Breast epithelium (tissue), 4 donors: ENCODE measurements at regions of chr13 and their contacts with region 1.

Region 1: GRCh38 chr13:109945206-109945960 is 159.0 kb upstream of the IRS2 start:
- DNase-seq: no peak
- H3K4me3 ChIP-seq: no peak overlapping the region
- H3K27ac ChIP-seq: no peak overlapping the region
- H3K4me1 ChIP-seq: no peaks in the 10 kb centered on the region
- H3K27me3 ChIP-seq: no peaks in the 10 kb centered on the region
- CTCF ChIP-seq: no peak
- POLR2A ChIP-seq: no peak

Region 2: DNA sequence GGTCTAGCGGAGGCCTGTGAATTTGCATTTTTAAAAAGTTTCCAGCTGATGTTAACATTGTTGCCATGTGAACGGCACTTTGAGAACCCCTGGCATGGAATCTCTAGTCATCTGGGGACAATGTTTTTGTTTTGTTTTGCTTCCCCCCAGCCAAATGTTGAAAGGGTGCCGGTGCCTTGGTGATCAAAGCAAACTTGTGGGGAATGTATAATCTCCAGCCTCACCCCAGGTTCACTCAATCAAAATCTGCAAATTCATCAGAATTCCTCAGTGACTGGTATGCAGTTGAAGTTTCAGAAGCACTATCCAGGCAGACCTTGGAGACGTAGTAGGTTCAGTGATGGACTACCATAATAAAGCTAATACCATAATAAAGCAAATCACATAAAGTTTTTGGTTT is 887.3 kb before region 1 on chr13:
- intact Hi-C with region 1: no loop called
- DNase-seq: no peak
- H3K4me3 ChIP-seq: no peak overlapping the region
- H3K27ac ChIP-seq: no peak overlapping the region
- H3K4me1 ChIP-seq: no peaks in the 10 kb centered on the region
- H3K27me3 ChIP-seq: no peaks in the 10 kb centered on the region
- CTCF ChIP-seq: no peak
- POLR2A ChIP-seq: no peak

Region 3: DNA sequence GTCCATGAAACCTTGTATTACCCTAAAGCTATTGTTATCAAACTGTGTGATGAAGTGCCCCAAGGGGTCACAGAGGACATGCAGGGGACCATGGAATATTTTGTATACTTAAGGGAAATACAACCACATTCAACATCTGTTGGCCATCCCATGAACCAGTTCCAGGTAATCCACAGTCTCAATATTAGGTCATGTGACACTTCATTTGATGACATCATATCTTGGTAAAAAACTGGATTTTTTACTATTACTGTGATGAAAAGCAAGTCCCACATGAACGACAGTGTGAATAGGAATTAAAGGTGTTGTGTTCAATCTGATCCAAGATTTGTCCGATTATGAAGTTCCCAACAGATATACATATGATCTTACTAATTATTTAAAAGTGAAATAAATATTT is 514.2 kb before region 1 on chr13:
- intact Hi-C with region 1: loop called (anchors 5 kb)
- DNase-seq: no peak
- H3K4me3 ChIP-seq: no peak overlapping the region
- H3K27ac ChIP-seq: no peak overlapping the region
- H3K4me1 ChIP-seq: no peaks in the 10 kb centered on the region
- H3K27me3 ChIP-seq: no peaks in the 10 kb centered on the region
- CTCF ChIP-seq: no peak
- POLR2A ChIP-seq: no peak

Region 4: GRCh38 chr13:109918179-109918711 is 27.1 kb before region 1 on chr13:
- intact Hi-C with region 1: no loop called
- DNase-seq: no peak
- H3K4me3 ChIP-seq: no peak overlapping the region
- H3K27ac ChIP-seq: peak overlapping the region in 1 of 2 donors; percentile 9
- H3K4me1 ChIP-seq: no peaks in the 10 kb centered on the region
- H3K27me3 ChIP-seq: no peaks in the 10 kb centered on the region
- CTCF ChIP-seq: no peak
- POLR2A ChIP-seq: no peak